Left lung (tissue), 14 donors: ENCODE measurements at regions of chr9 and their contacts with region 1.

Region 1: DNA sequence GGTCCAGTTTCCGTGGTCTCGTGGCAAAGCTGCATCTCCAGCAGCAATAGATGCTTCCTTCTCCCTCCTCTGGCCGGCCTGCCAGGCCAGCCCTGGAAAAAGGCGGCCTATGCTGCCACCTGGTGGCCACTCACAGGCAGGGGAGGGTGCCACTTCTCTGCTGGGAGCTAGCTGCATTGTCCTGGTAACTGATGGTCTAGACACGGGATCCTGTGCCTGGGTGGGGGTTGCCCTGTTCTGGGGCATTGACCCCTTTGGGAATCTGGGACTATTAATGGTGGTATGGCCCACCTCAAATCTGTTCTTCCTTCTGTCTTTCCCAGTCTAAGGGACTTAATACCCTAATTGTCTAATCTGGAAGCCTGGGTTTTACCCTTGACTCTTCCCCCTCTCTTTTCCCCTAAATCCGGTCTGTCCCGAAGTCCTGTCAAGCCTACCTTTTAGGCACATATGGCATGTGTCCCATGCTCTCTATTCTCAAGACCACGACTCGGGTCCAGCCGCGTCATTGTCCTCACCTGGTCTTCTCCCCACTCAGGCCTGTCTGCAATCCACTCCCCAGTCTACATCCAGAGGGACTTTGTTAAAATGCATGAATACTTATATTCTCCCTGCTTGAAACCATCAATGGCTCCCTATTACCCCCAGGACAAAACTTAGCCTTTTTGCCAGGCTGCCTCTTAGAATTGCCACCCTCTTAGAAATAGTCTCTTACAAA is 20.0 kb upstream of the PTGS1 start:
- DNase-seq: peak; percentile 72 to 95 (median 84)
- ATAC-seq: peak; percentile 93
- H3K4me3 ChIP-seq: no peak overlapping the region
- H3K27ac ChIP-seq: no peak overlapping the region
- H3K4me1 ChIP-seq: peaks cover 6 to 29% of the 10 kb centered on the region in 2 donors
- H3K27me3 ChIP-seq: peaks cover 0 to 37% of the 10 kb centered on the region in 2 donors
- CTCF ChIP-seq: peak; percentile 92 to 98

Region 2: GRCh38 chr9:122092611-122093506 is 257.9 kb before region 1 on chr9 and contains the start of gene TTLL11:
- intact Hi-C with region 1: loop called in 1 of 2 experiments (anchors 10 kb)
- DNase-seq: peak; percentile 86 to 98 (median 96)
- ATAC-seq: peak; percentile 97
- H3K4me3 ChIP-seq: peak within 1 kb of the TSS; percentile 90 to 91
- H3K27ac ChIP-seq: peak within 1 kb of the TSS; percentile 26 to 82
- H3K4me1 ChIP-seq: peaks cover 6 to 33% of the 10 kb centered on the region in 2 donors
- H3K27me3 ChIP-seq: no peaks in the 10 kb centered on the region
- CTCF ChIP-seq: no peak
- polyA plus RNA-seq, gene TTLL11: 8.4 to 11.6 (median 9.5) TPM

Region 3: GRCh38 chr9:122125158-122125508 is 225.7 kb before region 1 on chr9:
- intact Hi-C with region 1: loop called (anchors 5 to 10 kb)
- DNase-seq: peak; percentile 68 to 92 (median 80)
- ATAC-seq: peak; percentile 91
- H3K4me3 ChIP-seq: no peak overlapping the region
- H3K27ac ChIP-seq: no peak overlapping the region
- H3K4me1 ChIP-seq: peaks cover 9 to 33% of the 10 kb centered on the region in 2 donors
- H3K27me3 ChIP-seq: peaks cover 3 to 43% of the 10 kb centered on the region in 2 donors
- CTCF ChIP-seq: peak; percentile 90 to 97

Region 4: GRCh38 chr9:122168356-122168755 is 182.4 kb before region 1 on chr9:
- intact Hi-C with region 1: no loop called
- DNase-seq: no peak
- ATAC-seq: no peak
- H3K4me3 ChIP-seq: no peak overlapping the region
- H3K27ac ChIP-seq: no peak overlapping the region
- H3K4me1 ChIP-seq: no peaks in the 10 kb centered on the region
- H3K27me3 ChIP-seq: peaks cover 0 to under 1% of the 10 kb centered on the region in 2 donors
- CTCF ChIP-seq: no peak